Activated CD4-positive, alpha-beta T cell treated with anti-CD3 and anti-CD28 coated beads for 36 hours (primary cell): ENCODE measurements at regions of chr12 and their contacts with region 1.

Region 1: DNA sequence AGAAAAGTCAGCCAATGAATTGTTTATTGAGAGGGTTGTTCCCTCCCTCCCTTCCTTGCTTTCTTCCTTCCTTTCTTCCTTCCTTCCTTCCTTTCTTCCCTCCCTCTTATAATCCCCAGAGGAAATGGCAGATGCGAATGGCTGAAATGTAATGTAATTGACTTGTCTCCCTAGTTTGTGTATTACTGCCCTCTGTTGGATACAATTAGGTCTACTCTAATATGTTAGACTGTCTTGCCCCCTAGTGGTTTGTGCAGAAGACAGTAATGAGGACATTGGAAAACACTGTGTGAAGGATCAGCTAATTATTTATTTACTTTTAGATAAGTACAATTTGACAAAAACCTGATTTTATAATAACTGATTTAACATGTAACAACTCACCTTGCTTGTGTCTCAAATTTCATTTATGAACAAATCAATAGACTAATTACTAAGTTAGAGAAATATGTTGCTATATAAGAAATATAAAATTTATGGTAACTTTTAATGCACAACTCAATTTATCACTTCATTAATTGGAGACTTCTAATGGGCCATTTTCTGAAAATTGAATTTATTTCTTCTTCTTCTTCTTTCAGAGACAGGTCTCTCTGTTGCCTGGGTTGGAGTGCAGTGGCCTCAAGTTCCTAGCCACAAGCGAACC is 229.8 kb upstream of the LRIG3 start:
- DNase-seq: no peak
- ATAC-seq: peak; percentile 78
- H3K4me3 Mint-ChIP-seq: no peak overlapping the region
- H3K27ac Mint-ChIP-seq: no peak overlapping the region
- H3K4me1 Mint-ChIP-seq: no peaks in the 10 kb centered on the region
- H3K27me3 Mint-ChIP-seq: no peaks in the 10 kb centered on the region

Region 2: DNA sequence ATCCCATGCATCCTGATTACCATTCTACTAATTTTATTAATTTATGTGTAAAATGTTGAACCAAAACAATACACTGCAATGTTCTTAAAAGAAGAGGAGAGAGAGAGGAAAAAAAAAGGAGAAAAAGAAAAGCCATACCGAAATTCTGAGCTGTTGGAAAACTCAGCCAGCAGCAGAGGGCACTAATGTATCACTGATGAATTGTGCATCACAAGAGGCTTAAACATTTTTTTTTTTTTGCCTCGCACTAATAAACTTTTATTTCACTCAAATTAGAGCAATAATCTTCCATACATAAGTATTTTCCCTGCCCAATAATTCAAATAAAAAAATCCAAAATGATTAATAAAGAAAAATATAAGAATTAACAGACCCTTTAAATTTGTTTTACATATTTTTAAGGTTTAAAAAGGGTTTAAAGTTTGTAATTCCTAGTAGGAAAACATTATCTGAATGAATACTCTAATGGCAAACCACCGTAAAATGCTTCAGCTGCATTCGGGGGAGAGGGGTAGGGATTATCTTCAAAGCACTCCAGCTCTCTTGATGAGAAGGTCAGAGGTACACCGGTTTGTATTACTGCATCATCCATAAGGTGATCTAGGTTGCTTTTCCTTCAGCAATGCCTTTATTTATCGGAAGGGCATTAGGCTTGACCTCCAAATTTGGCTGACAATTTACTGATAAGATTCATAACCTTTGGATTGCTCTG is 1166.8 kb before region 1 on chr12:
- CTCF ChIA-PET with region 1: interaction called, 3 read pairs
- POLR2A ChIA-PET with region 1: no interaction called
- intact Hi-C with region 1: loop called in 1 of 2 experiments (anchors 5 kb)
- DNase-seq: peak; percentile 47
- ATAC-seq: no peak
- H3K4me3 Mint-ChIP-seq: no peak overlapping the region
- H3K27ac Mint-ChIP-seq: no peak overlapping the region
- H3K4me1 Mint-ChIP-seq: no peaks in the 10 kb centered on the region
- H3K27me3 Mint-ChIP-seq: peaks cover 10% of the 10 kb centered on the region

Region 3: DNA sequence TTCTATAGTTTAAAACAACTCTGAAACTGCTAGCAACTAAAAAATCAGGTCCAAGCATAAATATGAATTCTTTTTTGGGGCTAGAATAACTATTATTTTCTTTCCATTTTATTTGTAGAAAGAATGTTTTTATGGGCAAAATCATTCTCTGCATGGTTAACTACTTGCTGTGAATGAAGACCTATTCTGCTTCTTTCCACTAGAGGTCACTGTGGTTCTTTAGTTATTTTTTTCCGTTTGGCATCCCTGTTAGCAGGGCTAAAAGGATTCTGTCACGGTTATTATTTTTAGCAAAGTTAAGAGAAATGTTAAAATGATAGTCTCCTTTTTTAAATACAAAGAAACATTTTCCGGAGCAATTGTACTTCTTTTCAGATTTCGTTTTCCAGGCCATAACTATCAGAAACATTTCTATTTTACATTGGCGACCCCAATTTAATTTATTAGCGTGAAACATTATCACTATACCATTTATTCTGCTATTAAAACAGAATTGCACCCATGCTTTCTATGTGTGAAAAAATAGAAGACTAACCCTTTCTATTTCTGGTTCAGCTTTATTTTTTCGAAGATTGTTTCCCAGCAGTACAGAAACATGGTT is 804.0 kb before region 1 on chr12:
- CTCF ChIA-PET with region 1: interaction called, 3 read pairs
- POLR2A ChIA-PET with region 1: no interaction called
- intact Hi-C with region 1: loop called (anchors 1 kb)
- DNase-seq: no peak
- ATAC-seq: no peak
- H3K4me3 Mint-ChIP-seq: no peak overlapping the region
- H3K27ac Mint-ChIP-seq: no peak overlapping the region
- H3K4me1 Mint-ChIP-seq: no peaks in the 10 kb centered on the region
- H3K27me3 Mint-ChIP-seq: peaks cover 8% of the 10 kb centered on the region

Region 4: GRCh38 chr12:58540480-58541299 is 609.4 kb before region 1 on chr12:
- CTCF ChIA-PET with region 1: interaction called, 8 read pairs
- POLR2A ChIA-PET with region 1: no interaction called
- intact Hi-C with region 1: loop called in 1 of 2 experiments (anchors 1 kb)
- DNase-seq: peak; percentile 52
- ATAC-seq: no peak
- H3K4me3 Mint-ChIP-seq: no peak overlapping the region
- H3K27ac Mint-ChIP-seq: no peak overlapping the region
- H3K4me1 Mint-ChIP-seq: no peaks in the 10 kb centered on the region
- H3K27me3 Mint-ChIP-seq: peaks cover 10% of the 10 kb centered on the region

Region 5: DNA sequence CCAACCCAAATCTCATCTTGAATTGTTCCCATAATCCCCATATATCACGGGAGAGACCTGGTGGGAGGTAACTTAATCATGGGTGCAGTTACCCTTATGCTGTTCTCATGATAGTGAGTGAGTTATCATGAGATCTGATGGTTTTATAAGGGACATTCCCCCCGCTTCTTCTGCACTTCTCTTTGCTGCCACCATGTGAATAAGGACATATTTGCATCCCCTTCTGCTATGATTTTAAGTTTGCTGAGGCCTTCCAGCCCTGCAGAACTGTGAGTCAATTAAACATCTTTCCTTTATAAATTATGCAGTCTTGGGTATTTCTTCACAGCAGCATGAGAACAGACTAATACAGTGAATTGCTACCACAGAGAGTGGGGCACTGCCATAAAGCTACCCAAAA is 408.9 kb before region 1 on chr12:
- CTCF ChIA-PET with region 1: no interaction called
- POLR2A ChIA-PET with region 1: no interaction called
- intact Hi-C with region 1: no loop called
- DNase-seq: no peak
- ATAC-seq: no peak
- H3K4me3 Mint-ChIP-seq: no peak overlapping the region
- H3K27ac Mint-ChIP-seq: no peak overlapping the region
- H3K4me1 Mint-ChIP-seq: no peaks in the 10 kb centered on the region
- H3K27me3 Mint-ChIP-seq: no peaks in the 10 kb centered on the region

Region 6: GRCh38 chr12:59100585-59100984 is 49.5 kb before region 1 on chr12:
- CTCF ChIA-PET with region 1: no interaction called
- POLR2A ChIA-PET with region 1: no interaction called
- intact Hi-C with region 1: no loop called
- DNase-seq: no peak
- ATAC-seq: no peak
- H3K4me3 Mint-ChIP-seq: no peak overlapping the region
- H3K27ac Mint-ChIP-seq: no peak overlapping the region
- H3K4me1 Mint-ChIP-seq: no peaks in the 10 kb centered on the region
- H3K27me3 Mint-ChIP-seq: no peaks in the 10 kb centered on the region

Region 7: GRCh38 chr12:59113831-59114615 is 36.1 kb before region 1 on chr12:
- CTCF ChIA-PET with region 1: interaction called, 16 read pairs
- POLR2A ChIA-PET with region 1: no interaction called
- intact Hi-C with region 1: loop called (anchors 1 kb)
- DNase-seq: peak; percentile 80
- ATAC-seq: peak; percentile 53
- H3K4me3 Mint-ChIP-seq: no peak overlapping the region
- H3K27ac Mint-ChIP-seq: no peak overlapping the region
- H3K4me1 Mint-ChIP-seq: no peaks in the 10 kb centered on the region
- H3K27me3 Mint-ChIP-seq: peaks cover 2% of the 10 kb centered on the region